ENCODE measurements at regions of chr11 and their contacts with region 1.

Region 1: GRCh38 chr11:124415356-124415923 is 9.2 kb downstream of the OR8B4 start:
- DNase-seq: no peak
- ATAC-seq: no peak
- H3K4me3 Mint-ChIP-seq: no peak overlapping the region
- H3K27ac Mint-ChIP-seq: no peak overlapping the region
- H3K4me1 Mint-ChIP-seq: no peaks in the 10 kb centered on the region
- H3K27me3 Mint-ChIP-seq: peaks cover 8% of the 10 kb centered on the region

Region 2: GRCh38 chr11:124402326-124402922 is 13.0 kb before region 1 on chr11:
- CTCF ChIA-PET with region 1: interaction called, 36 read pairs
- POLR2A ChIA-PET with region 1: no interaction called
- intact Hi-C with region 1: no loop called
- DNase-seq: peak; percentile 82
- ATAC-seq: peak; percentile 93
- H3K4me3 Mint-ChIP-seq: no peak overlapping the region
- H3K27ac Mint-ChIP-seq: no peak overlapping the region
- H3K4me1 Mint-ChIP-seq: peaks cover 2% of the 10 kb centered on the region
- H3K27me3 Mint-ChIP-seq: peaks cover 4% of the 10 kb centered on the region